MCF 10A (cell line): ENCODE measurements at regions of chr2 and their contacts with region 1.

Region 1: DNA sequence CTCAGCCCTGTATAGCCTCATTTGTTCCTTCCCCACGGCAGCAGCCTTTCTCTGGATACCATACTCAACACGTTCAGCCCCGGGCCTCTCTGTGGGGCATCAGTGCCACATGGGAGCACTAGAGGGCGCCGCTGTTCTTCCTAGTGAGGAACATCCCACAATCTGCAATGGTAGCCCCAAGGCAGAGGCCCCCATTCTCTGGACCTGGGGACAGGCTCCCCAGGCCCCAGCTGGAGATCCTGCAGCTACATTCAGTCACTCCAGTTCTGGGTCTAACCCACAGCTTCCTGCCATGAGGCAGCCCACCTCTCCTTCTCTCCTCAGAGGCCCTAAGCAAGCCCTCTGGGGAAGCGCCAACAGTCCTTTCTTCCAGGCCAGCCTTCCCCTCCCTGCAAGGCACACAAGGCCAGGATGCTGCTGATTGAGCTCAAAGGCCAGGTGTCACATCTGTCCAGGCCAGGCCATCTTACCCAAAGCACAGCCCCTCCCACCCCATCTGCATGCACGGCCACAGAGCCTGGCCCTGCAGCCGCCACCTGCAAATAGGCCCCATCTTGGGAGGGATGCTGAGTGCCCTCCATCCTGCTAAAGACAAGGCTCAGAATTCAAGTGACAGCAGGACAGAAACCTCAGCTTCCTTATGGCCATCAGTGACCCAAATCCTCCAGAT is 14.3 kb upstream of the SFXN5 start:
- DNase-seq: peak; percentile 72
- H3K4me3 Mint-ChIP-seq: no peak overlapping the region
- H3K27ac Mint-ChIP-seq: no peak overlapping the region
- H3K4me1 Mint-ChIP-seq: peaks cover 24% of the 10 kb centered on the region
- H3K27me3 Mint-ChIP-seq: no peaks in the 10 kb centered on the region
- CTCF ChIP-seq: peak; percentile 89

Region 2: DNA sequence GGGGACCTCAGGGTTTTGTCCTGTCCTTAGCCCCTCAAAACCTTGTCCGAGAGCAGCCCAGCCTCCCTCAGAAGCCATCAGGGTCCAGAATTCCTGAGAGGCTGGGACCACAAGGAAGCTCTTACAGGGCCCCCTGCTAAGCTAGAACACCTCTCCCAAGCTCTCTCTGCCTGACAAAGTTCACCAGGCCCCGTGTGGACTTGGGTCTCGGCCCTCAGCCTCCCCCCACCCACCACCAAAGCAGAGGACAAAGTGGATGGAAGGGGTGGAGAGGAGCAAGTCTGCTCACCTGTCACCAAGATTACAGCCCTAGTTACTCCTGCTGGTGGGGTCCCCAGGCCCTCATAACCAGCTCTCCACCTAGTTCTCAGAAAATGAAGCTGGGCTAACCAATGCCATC is 10.1 kb after region 1 on chr2:
- CTCF ChIA-PET with region 1: interaction called, 37 read pairs
- POLR2A ChIA-PET with region 1: no interaction called
- intact Hi-C with region 1: no loop called
- DNase-seq: no peak
- H3K4me3 Mint-ChIP-seq: no peak overlapping the region
- H3K27ac Mint-ChIP-seq: no peak overlapping the region
- H3K4me1 Mint-ChIP-seq: peaks cover 13% of the 10 kb centered on the region
- H3K27me3 Mint-ChIP-seq: no peaks in the 10 kb centered on the region
- CTCF ChIP-seq: no peak

Region 3: DNA sequence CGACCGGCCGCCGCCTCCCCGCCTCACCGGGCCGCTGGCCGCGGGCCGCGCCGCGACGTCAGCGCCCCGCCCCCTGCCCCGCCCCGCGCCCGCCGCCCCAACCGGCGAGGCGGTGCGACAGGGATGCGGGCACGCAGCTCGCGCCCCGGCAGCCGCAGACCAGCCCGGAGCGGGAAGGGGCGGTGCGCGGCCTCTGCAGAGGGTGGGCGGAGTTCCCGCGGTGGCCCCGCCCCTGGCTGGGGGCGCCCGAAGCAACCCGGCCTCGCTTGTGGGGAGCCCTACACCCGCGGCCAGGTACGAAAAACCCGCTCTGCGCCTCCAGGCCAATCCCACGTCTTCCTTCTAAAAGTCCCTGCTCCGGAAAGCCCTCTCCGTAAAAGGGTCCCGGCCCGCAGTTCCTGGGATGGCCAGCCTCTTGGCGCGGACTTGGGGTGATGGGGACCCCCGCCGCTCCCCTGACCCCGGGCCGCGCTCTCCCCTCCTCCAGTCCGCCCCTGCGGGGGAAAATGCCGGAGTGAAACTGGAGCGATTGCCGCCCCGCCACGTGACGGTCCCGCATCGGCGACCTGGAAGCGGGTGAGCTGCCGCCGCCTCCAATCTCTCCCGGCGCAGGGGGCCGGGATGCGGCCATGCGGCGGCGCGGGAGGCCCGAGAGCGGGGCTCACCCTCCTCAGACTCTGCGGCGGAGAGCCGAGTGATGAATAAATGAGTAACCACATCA is 27.2 kb after region 1 on chr2 and contains the start of gene RAB11FIP5:
- CTCF ChIA-PET with region 1: interaction called, 51 read pairs
- POLR2A ChIA-PET with region 1: interaction called, 28 read pairs
- intact Hi-C with region 1: loop called (anchors 1 kb)
- DNase-seq: peak; percentile 75
- H3K4me3 Mint-ChIP-seq: peak within 1 kb of the TSS; percentile 96
- H3K27ac Mint-ChIP-seq: peak within 1 kb of the TSS; percentile 89
- H3K4me1 Mint-ChIP-seq: peaks cover 20% of the 10 kb centered on the region
- H3K27me3 Mint-ChIP-seq: no peaks in the 10 kb centered on the region
- CTCF ChIP-seq: no peak
- total RNA-seq, gene RAB11FIP5: 35.6 and 36.9 TPM in 2 replicates

Region 4: DNA sequence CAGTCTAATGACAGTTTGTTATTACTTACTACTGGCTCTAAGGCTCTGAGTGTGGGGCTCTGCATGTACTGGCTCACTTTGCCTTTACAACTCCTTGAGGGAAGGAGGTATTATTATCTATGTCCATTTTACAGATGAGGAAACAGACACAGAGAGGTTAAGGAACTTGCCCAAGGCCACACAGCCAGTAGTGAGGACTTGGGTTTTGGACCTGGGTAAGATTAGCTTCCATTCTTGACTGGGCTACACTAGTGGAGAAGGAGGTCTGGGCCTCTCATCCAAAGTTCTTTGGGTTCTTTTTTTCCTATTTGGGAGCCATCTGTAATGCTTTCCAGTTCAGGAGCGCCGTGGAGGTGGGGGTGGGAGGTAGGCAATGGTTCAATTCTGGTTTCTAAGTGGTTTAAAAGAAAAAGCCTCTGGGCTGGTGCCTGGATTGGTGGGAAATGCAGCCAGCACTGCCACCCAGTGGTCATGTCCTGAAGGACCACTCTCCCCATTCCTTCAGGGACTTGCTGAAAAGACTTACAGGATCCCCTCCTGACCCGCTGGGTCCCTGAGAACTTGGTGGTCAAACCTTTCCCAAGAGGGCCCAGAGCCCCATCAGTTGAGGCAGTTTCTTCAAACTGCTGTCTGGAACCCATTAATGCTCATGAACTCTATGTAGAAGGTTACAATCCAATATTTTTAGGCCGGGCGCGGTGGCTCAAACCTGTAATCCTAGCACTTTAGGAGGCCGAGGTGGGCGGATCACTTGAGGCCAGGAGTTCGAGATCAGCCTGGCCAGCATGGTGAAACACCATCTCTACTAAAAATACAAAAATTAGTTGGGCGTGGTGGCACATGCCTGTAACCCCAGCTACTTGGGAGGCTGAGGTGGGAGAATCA is 77.9 kb after region 1 on chr2:
- CTCF ChIA-PET with region 1: interaction called, 92 read pairs
- POLR2A ChIA-PET with region 1: no interaction called
- intact Hi-C with region 1: loop called (anchors 1 kb)
- DNase-seq: peak; percentile 72
- H3K4me3 Mint-ChIP-seq: no peak overlapping the region
- H3K27ac Mint-ChIP-seq: no peak overlapping the region
- H3K4me1 Mint-ChIP-seq: no peaks in the 10 kb centered on the region
- H3K27me3 Mint-ChIP-seq: peaks cover under 1% of the 10 kb centered on the region
- CTCF ChIP-seq: peak; percentile 91